K562 (cell line): ENCODE measurements at regions of chr1 and their contacts with region 1.

Region 1: DNA sequence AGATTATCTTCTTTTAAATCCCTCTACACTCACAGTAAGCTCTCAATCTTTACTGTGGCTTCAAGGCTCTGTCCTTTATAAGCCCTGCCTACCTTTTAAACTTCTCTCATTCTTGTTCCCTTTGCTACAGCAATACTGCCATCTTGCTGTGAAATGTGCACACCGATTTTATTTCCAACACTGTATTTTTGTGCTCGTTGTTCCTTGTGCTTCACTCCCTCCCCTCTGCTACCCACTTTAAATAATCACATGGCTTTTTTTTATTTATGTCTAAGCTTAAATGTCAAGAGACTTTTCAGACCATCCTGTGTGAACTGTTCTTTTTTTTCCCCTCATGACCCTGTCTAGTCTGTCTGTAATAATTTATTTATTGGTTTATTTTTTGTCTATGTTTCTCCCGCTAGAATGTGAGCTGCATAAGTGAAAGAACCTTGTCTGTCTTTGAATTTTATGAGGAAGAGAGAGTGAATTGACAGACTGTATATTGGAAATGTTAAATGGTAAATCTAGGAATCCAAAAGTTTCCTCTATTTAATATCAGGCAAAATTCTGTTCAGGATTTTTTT is 45.7 kb downstream of the ABCD3 start:
- DNase-seq: peak; percentile 14 to 52 (median 24)
- ATAC-seq: peak; percentile 92
- H3K4me3 ChIP-seq: no peak overlapping the region
- H3K27ac ChIP-seq: no peak overlapping the region
- H3K4me1 ChIP-seq: 0 out of 5 replicates have a peak, but pooled peaks cover 0 to 2% of the 10 kb centered on the region in 2 experiments
- H3K27me3 ChIP-seq: no peaks in the 10 kb centered on the region
- CTCF ChIP-seq: peak; percentile 58 to 81 (median 68); a peak in 5 of 6 replicates
- EP300 ChIP-seq: no peak
- POLR2A ChIP-seq: no peak
- RAD21 ChIP-seq: peak; percentile 87

Region 2: GRCh38 chr1:94039514-94039870 is 424.4 kb before region 1 on chr1:
- CTCF ChIA-PET with region 1: no interaction called
- POLR2A ChIA-PET with region 1: no interaction called
- in situ Hi-C with region 1: loop called (anchors 10 kb)
- intact Hi-C with region 1: loop called (anchors 5 kb)
- DNase-seq: peak; percentile 61 to 78 (median 76)
- ATAC-seq: peak; percentile 88
- H3K4me3 ChIP-seq: no peak overlapping the region
- H3K27ac ChIP-seq: no peak overlapping the region
- H3K4me1 ChIP-seq: no peaks in the 10 kb centered on the region
- H3K27me3 ChIP-seq: peaks cover 7 to 36% of the 10 kb centered on the region in 2 experiments; a peak in 4 of 5 replicates
- CTCF ChIP-seq: peak; percentile 74 to 86 (median 77)
- EP300 ChIP-seq: no peak
- POLR2A ChIP-seq: no peak
- RAD21 ChIP-seq: peak; percentile 12 to 63; a peak in 2 of 4 replicates

Region 3: DNA sequence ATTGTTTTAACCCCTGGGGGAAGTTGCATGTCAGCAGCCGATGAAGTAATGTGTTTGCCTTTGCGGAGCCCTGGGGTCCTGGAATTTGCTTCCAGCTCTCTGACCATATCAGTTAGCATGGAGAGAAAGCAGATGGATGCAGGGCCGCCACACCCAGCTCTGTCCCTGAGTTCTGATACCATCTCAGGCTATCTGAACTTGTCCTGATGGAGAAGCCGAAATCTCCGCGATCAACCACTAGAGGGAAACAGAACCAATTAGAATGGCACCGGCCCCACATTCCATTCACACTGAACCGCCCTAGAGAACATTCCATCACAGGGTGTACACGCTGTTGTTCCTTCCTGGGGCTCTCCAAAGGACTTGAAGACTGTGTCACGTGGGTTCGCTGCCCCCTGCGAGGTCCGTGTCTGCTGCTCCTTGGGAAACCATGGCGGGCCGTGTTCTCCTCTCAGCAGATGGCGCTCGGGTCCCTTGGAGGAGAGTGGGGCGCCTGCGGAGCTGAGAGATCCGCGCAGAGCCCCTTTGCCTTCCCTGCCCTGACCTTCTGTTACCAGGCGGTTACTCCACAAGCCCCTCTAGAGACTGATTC is 418.3 kb before region 1 on chr1:
- CTCF ChIA-PET with region 1: no interaction called
- POLR2A ChIA-PET with region 1: no interaction called
- in situ Hi-C with region 1: loop called (anchors 10 kb)
- intact Hi-C with region 1: no loop called
- DNase-seq: peak; percentile 55 to 68 (median 60)
- ATAC-seq: peak; percentile 94
- H3K4me3 ChIP-seq: no peak overlapping the region
- H3K27ac ChIP-seq: no peak overlapping the region
- H3K4me1 ChIP-seq: 0 out of 5 replicates have a peak, but pooled peaks cover 0 to 4% of the 10 kb centered on the region in 2 experiments
- H3K27me3 ChIP-seq: peaks cover 9 to 29% of the 10 kb centered on the region in 2 experiments; a peak in 4 of 5 replicates
- CTCF ChIP-seq: peak in 2 of 3 experiments; percentile 83 to 87
- EP300 ChIP-seq: no peak
- POLR2A ChIP-seq: no peak
- RAD21 ChIP-seq: peak; percentile 72 to 76

Region 4: DNA sequence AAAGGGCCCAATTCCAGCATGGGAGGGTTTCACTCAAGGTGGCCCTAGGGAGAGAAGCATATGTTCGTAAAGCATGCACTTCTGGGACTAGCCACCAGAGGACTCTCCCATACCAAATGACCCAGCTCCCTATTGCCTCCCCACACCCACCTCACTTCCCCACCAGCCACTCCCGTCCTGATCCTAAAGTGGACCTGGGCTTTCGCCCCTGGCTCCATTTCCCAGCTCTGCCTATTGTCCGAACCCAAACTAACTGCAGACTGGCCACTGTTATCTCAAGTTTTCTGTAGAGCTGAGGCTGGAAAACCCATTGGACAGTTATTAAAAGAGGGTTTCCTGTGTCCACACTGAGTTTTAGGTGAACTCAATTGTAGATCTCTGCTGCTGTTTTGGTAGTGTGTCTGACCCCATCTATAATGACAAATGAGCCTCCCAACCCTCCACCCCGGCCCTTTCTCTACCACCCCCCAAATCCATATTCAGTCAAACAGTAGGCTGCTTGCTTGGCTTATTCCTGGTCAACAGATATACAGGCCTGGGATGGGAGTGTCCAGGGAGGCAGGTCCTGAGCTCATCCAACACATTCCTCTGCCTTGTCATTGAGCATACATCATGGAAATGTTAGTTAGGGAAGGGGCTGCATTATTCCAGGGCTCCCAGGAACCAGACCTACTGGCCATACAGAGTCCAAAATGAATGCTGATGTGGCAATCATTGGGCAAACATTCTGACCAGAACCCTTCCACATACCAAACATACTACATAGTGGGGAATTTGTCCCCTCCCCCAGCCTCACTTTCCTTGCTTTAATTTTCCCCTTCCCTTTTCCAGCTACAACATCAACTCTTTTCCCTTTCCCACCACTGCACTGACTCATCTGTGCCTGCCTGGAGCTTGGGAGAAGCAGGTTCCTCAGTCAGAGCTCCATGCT is 402.1 kb before region 1 on chr1:
- CTCF ChIA-PET with region 1: interaction called, 5 read pairs
- POLR2A ChIA-PET with region 1: interaction called, 3 read pairs
- in situ Hi-C with region 1: no loop called
- intact Hi-C with region 1: loop called (anchors 1 kb)
- DNase-seq: peak; percentile 55 to 77 (median 73)
- ATAC-seq: peak; percentile 98
- H3K4me3 ChIP-seq: no peak overlapping the region
- H3K27ac ChIP-seq: no peak overlapping the region
- H3K4me1 ChIP-seq: no peaks in the 10 kb centered on the region
- H3K27me3 ChIP-seq: peaks cover 0 to 6% of the 10 kb centered on the region in 2 experiments; a peak in 2 of 5 replicates
- CTCF ChIP-seq: peak; percentile 79 to 80 (median 79)
- EP300 ChIP-seq: no peak
- POLR2A ChIP-seq: no peak
- RAD21 ChIP-seq: peak; percentile 76 to 89

Region 5: DNA sequence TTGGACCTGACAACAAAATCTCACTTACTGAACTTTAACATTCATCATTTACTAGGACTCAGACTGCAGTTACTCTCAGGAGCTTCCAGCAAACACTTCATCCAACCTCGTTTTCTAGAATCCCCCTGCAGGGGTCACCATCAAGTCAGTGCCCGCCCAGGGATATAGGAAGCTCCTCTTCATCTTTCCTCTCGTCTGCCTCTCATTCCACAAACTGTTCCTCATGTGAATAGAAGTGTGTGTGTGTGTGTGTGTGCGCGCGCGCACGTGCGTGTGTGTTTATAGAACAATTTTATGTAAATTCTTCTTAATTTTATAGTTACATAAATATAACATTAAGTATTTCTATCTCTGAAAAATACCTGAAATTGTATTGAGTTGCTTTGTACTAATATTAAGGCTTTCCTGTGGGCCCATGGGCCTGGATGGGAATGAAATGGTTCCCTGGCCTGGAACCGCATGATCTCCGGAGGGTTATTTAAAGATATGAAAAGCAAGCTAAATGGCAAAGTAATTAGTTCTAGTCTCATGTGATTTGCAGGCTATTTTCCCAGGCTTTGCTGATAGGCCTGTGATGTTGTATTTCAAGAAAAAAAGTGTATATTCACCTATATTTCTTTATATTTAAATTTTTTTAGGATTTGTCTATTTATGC is 67.4 kb before region 1 on chr1:
- CTCF ChIA-PET with region 1: interaction called, 11 read pairs
- POLR2A ChIA-PET with region 1: no interaction called
- in situ Hi-C with region 1: no loop called
- intact Hi-C with region 1: loop called (anchors 1 kb)
- DNase-seq: peak in 2 of 4 experiments; percentile 9 to 10
- ATAC-seq: no peak; the same call in 2 of the 3 replicates
- H3K4me3 ChIP-seq: no peak overlapping the region
- H3K27ac ChIP-seq: no peak overlapping the region
- H3K4me1 ChIP-seq: no peaks in the 10 kb centered on the region
- H3K27me3 ChIP-seq: peaks cover 4 to 12% of the 10 kb centered on the region in 2 experiments; a peak in 3 of 5 replicates
- CTCF ChIP-seq: peak in 2 of 3 experiments; percentile 18 to 48; a peak in 3 of 6 replicates
- EP300 ChIP-seq: no peak
- POLR2A ChIP-seq: no peak
- RAD21 ChIP-seq: peak in 1 of 2 experiments; percentile 40; a peak in 2 of 4 replicates

Region 6: DNA sequence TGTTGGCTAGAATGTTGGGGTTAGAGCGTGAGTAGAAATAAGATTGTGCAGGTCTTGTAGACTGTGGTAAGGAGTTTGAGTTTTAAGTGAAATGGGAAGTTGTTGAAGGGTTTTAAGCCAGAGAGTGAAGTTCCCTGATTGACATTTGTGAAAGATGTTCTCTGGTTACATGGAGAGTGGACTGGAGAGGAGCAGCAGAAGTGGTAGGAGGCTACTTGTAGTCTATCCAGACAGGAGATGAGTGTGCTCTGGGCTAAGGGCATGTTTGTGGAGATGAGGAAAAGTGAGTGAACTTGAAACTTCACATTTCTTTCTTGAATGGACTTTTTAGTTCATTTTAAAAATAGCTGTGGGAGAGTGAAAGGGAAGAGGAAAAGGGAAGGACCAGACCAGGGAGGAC is 40.8 kb after region 1 on chr1:
- CTCF ChIA-PET with region 1: no interaction called
- POLR2A ChIA-PET with region 1: no interaction called
- in situ Hi-C with region 1: no loop called
- intact Hi-C with region 1: no loop called
- DNase-seq: no peak
- ATAC-seq: no peak
- H3K4me3 ChIP-seq: no peak overlapping the region
- H3K27ac ChIP-seq: no peak overlapping the region
- H3K4me1 ChIP-seq: no peaks in the 10 kb centered on the region
- H3K27me3 ChIP-seq: no peaks in the 10 kb centered on the region
- CTCF ChIP-seq: no peak
- EP300 ChIP-seq: no peak
- POLR2A ChIP-seq: no peak
- RAD21 ChIP-seq: no peak

Region 7: DNA sequence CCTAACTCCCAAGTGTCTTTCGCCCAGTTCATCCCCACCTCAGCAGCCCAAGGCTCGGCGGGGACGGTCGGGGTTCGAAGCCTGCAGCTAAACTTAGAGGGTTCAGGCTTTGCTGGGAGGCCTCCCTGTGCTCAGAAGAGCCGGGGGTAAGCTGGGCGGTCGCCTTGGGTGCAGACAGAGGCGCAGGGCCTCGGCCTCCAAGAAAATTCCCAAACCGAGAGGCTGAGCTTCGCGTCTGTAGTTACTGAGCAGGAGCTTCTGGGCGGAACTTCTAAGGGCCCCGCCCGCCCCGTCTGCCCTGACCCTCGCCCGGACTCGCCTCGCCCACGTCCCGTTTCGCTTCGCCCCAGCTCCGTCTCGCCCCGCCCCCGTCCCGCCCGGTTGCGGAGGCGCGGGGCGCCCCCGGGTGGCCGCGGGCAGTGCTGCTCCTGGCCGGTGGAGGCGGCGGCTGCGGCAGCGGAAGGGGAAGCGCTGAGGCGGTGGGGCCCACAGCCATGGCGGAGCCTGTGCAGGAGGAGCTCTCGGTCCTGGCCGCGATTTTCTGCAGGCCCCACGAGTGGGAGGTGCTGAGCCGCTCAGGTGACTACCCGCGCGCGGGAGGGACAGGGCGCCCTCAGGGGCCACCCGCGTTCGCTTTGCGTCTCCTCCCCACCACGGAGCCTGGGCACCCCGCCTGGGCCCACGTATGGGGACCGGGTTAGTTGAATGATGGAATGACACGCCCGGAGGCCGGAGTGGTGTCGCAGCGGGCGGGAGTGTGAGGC is 770.1 kb after region 1 on chr1 and contains the start of gene RWDD3:
- CTCF ChIA-PET with region 1: no interaction called
- POLR2A ChIA-PET with region 1: no interaction called
- in situ Hi-C with region 1: no loop called
- intact Hi-C with region 1: no loop called
- DNase-seq: peak; percentile 93 to 94 (median 94)
- ATAC-seq: peak; percentile 97
- H3K4me3 ChIP-seq: peak within 1 kb of the TSS; percentile 79
- H3K27ac ChIP-seq: peak within 1 kb of the TSS; percentile 70
- H3K4me1 ChIP-seq: peaks cover 11 to 13% of the 10 kb centered on the region in 2 experiments; a peak in 4 of 5 replicates
- H3K27me3 ChIP-seq: no peaks in the 10 kb centered on the region
- CTCF ChIP-seq: peak; percentile 73 to 93 (median 85)
- EP300 ChIP-seq: peak; percentile 29; the same call in 1 of the 2 replicates
- POLR2A ChIP-seq: peak; percentile 82
- RAD21 ChIP-seq: peak; percentile 94 to 98
- polyA plus RNA-seq, gene RWDD3: 52.7 to 65.0 TPM